ENCODE measurements at regions of chr11 and their contacts with region 1.

Region 1: GRCh38 chr11:67044479-67044878 is 12.2 kb upstream of the RHOD start:
- DNase-seq: no peak
- H3K4me3 ChIP-seq: no peak overlapping the region
- H3K27ac ChIP-seq: no peak overlapping the region
- H3K4me1 ChIP-seq: peaks cover 12% of the 10 kb centered on the region
- H3K27me3 ChIP-seq: no peaks in the 10 kb centered on the region
- CTCF ChIP-seq: no peak

Region 2: GRCh38 chr11:67099831-67100324 is 55.4 kb after region 1 on chr11:
- CTCF ChIA-PET with region 1: no interaction called
- dilution Hi-C with region 1: loop called (anchors 5 kb)
- in situ Hi-C with region 1: no loop called
- intact Hi-C with region 1: no loop called
- DNase-seq: no peak
- H3K4me3 ChIP-seq: no peak overlapping the region
- H3K27ac ChIP-seq: no peak overlapping the region
- H3K4me1 ChIP-seq: peaks cover 8% of the 10 kb centered on the region
- H3K27me3 ChIP-seq: no peaks in the 10 kb centered on the region
- CTCF ChIP-seq: no peak

Region 3: GRCh38 chr11:67195971-67196456 is 151.5 kb after region 1 on chr11:
- CTCF ChIA-PET with region 1: no interaction called
- dilution Hi-C with region 1: no loop called
- in situ Hi-C with region 1: no loop called
- intact Hi-C with region 1: no loop called
- DNase-seq: no peak
- H3K4me3 ChIP-seq: no peak overlapping the region
- H3K27ac ChIP-seq: no peak overlapping the region
- H3K4me1 ChIP-seq: no peaks in the 10 kb centered on the region
- H3K27me3 ChIP-seq: no peaks in the 10 kb centered on the region
- CTCF ChIP-seq: no peak